A673 (cell line): ENCODE measurements at regions of chr6 and their contacts with region 1.

Region 1: DNA sequence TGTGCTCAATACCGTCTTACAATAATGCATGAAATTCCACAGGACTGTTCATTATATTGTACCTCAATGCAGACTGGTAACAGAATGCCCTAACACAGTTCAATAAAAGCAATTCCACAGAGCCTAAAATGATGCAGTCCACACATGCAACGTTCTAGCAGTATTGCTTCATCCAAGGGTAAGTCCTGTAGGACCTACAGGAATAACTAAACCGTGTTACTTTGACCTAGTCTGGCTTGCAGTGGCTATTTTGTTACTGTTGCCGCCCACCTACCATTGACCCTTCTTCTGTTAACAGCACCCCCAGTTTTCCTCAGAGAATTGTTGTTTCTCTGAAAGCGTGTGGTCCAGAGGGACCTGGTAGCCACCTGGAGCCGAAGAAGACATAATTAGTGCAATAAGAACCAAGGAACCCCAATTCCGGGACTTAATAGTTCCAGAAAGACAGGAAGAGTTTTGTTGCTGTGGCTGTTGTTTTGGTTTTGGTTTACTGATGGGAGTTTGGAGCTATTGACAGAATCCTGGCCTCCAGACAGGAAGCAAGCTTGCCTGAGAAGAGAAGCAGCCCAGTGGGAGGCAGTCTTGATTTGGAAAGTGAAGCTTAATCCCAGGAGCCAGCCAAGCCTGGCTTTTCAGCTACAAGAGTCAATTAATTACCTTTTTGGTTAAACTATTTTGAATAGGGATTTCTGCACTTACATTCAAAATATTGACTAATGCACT is 91.3 kb downstream of the FRK start:
- DNase-seq: peak; percentile 88
- H3K4me3 ChIP-seq: peak overlapping the region; percentile 33
- H3K27ac ChIP-seq: peak overlapping the region; percentile 84
- H3K4me1 ChIP-seq: peaks cover 22% of the 10 kb centered on the region
- H3K27me3 ChIP-seq: no peaks in the 10 kb centered on the region
- CTCF ChIP-seq: peak; percentile 57

Region 2: GRCh38 chr6:115954740-115955139 is 14.6 kb before region 1 on chr6:
- CTCF ChIA-PET with region 1: no interaction called
- POLR2A ChIA-PET with region 1: no interaction called
- intact Hi-C with region 1: loop called (anchors 2 kb)
- DNase-seq: no peak
- H3K4me3 ChIP-seq: no peak overlapping the region
- H3K27ac ChIP-seq: no peak overlapping the region
- H3K4me1 ChIP-seq: no peaks in the 10 kb centered on the region
- H3K27me3 ChIP-seq: no peaks in the 10 kb centered on the region
- CTCF ChIP-seq: no peak

Region 3: GRCh38 chr6:116027801-116028200 is 58.4 kb after region 1 on chr6:
- CTCF ChIA-PET with region 1: no interaction called
- POLR2A ChIA-PET with region 1: no interaction called
- intact Hi-C with region 1: no loop called
- DNase-seq: no peak
- H3K4me3 ChIP-seq: no peak overlapping the region
- H3K27ac ChIP-seq: peak overlapping the region; percentile 72
- H3K4me1 ChIP-seq: peaks cover 79% of the 10 kb centered on the region
- H3K27me3 ChIP-seq: no peaks in the 10 kb centered on the region
- CTCF ChIP-seq: no peak